Activated naive CD4-positive, alpha-beta T cell treated with anti-CD3 and anti-CD28 coated beads, Interleukin-2, amount 10 ng/mL, durations not matched to agents 7 days and 5 days (primary cell): ENCODE measurements at regions of chr13 and their contacts with region 1.

Region 1: DNA sequence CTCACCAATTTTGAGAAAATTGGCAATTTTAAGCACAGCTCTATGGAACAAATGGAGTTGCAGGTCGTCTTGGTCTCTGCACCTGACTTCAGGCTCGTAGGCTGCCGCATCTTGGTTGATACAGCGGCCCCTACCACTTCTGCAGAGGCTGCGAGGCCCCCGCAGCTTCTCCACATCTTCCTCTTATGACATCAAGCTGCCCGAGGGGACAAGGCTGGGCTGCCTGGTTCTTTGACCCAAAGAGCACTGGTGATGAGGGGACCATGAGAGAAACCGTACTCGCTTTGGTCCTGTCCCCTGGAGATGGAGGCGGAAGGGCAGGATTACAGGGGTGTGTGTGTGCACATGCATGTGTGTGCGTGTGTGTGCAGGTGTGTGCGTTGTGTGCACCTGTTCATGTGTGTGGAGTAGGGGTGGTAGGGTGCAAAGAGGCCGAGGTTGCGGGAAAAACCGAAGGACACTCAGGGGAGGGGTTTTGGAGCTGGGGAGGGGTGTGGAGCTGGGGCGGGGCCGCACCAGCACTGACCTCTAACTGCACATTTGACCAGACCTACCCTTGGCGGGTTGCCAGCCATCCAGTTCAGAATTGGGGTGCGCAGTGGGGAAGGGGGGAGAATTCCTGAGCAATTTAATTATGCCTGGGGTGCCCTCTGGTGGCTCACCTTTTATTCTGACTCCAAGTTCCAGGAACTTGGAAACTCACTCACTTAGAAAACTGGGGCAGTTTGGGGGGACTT is 65.1 kb upstream of the ARHGEF7 start:
- DNase-seq: no peak
- H3K4me3 Mint-ChIP-seq: no peak overlapping the region
- H3K27ac Mint-ChIP-seq: no peak overlapping the region
- H3K4me1 Mint-ChIP-seq: peaks cover 7% of the 10 kb centered on the region
- H3K27me3 Mint-ChIP-seq: peaks cover 15% of the 10 kb centered on the region

Region 2: DNA sequence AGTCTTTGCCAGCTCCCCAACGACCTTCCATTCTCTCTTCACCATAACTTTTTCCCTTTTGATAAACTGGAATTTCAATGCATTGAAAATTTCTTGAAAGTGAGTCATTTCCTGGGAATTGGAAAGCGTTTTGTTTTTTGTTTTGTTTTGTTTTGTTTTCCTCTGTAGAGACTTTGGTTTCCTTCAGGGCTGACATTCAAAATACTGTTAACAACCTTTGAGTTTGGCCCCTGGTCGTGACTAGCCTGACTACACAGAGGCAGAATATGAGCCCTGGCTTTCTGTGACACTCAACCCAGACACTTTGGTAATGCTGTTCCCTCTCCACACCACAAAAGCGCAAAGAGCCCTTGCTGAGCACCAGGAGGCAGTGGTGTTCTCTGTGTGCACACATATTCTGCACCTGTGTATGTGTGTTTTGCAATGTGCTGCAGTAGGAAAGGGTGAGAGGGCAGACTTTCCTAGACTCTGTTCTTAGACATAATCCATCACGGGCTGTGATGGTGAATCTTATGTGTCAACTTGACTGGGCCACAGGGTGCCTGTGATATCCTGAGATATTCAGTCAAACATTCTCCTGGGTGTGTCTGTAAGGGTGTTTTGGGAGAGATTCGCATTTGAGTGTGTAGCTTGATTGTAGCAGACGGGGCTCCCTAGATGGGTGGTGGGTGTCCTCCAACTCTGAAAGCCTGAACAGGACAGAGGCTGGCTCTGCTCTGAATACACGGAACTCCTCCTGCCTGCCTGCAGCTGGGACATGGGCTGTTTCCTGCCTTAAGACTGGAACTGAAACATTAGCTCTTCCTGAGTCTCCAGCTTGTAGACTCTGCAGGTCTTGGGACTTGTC is 105.6 kb before region 1 on chr13:
- CTCF ChIA-PET with region 1: interaction called, 11 read pairs
- DNase-seq: peak; percentile 49
- H3K4me3 Mint-ChIP-seq: no peak overlapping the region
- H3K27ac Mint-ChIP-seq: no peak overlapping the region
- H3K4me1 Mint-ChIP-seq: no peaks in the 10 kb centered on the region
- H3K27me3 Mint-ChIP-seq: no peaks in the 10 kb centered on the region

Region 3: GRCh38 chr13:111216166-111216960 is 166.4 kb after region 1 on chr13:
- CTCF ChIA-PET with region 1: no interaction called
- DNase-seq: peak; percentile 65
- H3K4me3 Mint-ChIP-seq: no peak overlapping the region
- H3K27ac Mint-ChIP-seq: no peak overlapping the region
- H3K4me1 Mint-ChIP-seq: peaks cover 3% of the 10 kb centered on the region
- H3K27me3 Mint-ChIP-seq: no peaks in the 10 kb centered on the region